SK-N-SH (cell line): ENCODE measurements at regions of chr1 and their contacts with region 1.

Region 1: DNA sequence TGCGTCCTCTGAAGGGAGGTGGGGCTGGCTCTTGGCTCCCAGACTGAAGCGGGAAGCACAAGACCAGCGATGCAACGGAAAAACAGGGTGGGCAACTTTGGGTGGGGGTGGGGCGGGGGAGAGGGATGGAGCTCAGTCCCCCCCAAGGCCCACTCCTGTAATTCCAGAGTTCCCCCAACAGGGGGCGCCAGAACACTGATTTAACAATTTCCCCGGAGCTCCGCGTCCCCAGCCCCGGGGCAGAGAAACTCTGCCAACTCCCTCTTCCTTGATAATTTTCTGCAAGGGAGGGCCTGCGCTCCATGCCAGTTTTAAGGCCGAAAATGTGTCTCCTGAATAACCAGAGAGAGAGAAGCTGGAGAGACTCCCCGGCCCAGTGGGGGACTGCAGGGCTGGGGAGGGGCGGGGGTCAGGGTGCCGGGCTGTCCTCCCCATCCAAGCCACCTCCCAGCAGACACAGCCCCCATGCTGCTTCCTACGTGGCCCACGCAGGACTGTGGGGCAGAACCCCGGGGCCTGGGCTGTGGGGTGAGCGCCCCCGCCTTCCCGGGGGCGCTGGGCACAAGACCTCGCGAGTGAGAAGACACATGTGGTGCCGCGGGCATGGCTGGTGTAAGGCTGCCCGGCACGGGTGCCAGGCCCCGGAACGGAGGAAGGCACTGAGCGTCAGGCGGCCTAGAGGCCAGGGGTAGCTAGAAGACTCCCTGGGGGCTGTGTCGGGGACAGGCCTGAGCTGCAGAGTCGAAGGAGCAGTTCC is 51.4 kb downstream of the KIF21B start:
- DNase-seq: peak; percentile 92
- H3K4me3 ChIP-seq: peak overlapping the region; percentile 9 to 29; a peak in 2 of 4 replicates
- H3K27ac ChIP-seq: no peak overlapping the region
- H3K4me1 ChIP-seq: peaks cover 0 to 3% of the 10 kb centered on the region in 2 experiments; a peak in 1 of 4 replicates
- H3K27me3 ChIP-seq: no peaks in the 10 kb centered on the region
- CTCF ChIP-seq: peak; percentile 79
- EP300 ChIP-seq: no peak
- RAD21 ChIP-seq: peak; percentile 87

Region 2: DNA sequence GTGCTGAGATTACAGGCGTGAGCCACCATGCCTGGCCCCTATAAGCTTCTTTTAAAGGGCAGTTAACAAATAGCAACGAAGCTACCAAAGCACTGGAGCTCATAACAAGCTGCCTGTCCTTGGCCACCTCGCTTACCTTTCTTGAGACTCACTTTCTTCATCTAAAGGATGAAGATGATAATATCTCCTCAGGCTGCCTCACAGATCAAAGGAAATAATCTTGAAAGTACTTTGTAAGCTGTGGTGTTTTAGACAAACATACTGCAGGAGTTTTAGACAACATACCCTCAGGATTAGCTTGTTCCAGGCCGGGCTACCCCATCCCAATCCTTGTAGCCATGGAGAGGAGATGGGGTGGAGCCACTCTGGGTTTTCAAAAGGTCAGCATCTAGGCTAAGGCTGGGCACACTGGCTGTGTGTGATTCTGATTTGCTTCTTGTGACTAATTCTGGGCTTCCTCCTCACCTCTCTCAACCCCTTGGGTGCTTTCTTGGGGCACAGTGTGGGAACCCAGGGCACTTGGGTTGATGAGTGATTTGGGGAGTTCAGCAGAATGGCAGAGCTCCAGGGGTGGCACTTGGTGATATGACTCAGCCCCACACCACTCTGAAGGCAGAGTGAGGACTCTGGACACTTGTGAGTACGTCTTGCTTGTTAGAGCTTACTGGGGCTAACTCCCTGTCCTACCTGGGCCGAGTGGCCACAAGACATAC is 94.1 kb before region 1 on chr1:
- CTCF ChIA-PET with region 1: interaction called, 13 read pairs
- POLR2A ChIA-PET with region 1: no interaction called
- DNase-seq: no peak
- H3K4me3 ChIP-seq: no peak overlapping the region
- H3K27ac ChIP-seq: no peak overlapping the region
- H3K4me1 ChIP-seq: no peaks in the 10 kb centered on the region; a peak in 1 of 4 replicates
- H3K27me3 ChIP-seq: no peaks in the 10 kb centered on the region; the same call in 1 of the 2 replicates
- CTCF ChIP-seq: no peak
- EP300 ChIP-seq: no peak
- RAD21 ChIP-seq: no peak

Region 3: GRCh38 chr1:200925831-200926230 is 46.3 kb before region 1 on chr1:
- CTCF ChIA-PET with region 1: no interaction called
- POLR2A ChIA-PET with region 1: no interaction called
- DNase-seq: no peak
- H3K4me3 ChIP-seq: no peak overlapping the region
- H3K27ac ChIP-seq: no peak overlapping the region
- H3K4me1 ChIP-seq: no peaks in the 10 kb centered on the region
- H3K27me3 ChIP-seq: peaks cover 10% of the 10 kb centered on the region; the same call in 1 of the 2 replicates
- CTCF ChIP-seq: no peak
- EP300 ChIP-seq: no peak
- RAD21 ChIP-seq: no peak

Region 4: DNA sequence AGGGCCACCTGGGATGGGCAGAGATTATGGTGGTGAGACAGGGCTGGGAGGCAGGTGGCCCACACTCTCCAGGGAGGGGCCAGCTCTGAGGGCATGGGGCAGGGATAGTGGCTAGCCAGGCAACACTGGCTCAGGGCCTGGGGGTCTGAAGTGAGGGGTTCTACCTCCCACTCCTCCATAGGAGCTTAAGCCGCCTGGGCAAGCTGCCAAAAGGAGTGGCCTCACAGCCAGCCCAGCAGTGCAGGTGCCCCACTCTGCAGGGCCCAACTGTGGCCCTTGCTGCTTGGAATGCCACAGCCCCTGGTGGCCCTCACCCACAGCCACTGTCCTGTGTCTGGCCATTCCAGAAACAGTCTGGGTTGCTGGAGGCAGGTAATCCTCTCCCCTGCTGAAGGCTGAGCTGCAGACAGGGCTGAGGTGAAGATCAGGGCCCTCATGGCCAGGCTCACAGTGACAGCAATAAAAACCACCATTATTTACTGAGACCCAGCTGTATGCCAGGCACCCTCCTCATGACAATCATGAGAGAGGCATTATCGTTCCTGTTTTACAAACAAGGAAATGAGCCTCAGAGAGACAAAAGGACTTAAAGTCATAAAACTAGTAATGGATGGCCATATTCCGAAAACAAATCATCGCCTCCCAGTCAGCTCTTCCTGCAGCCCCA is 20.4 kb after region 1 on chr1:
- CTCF ChIA-PET with region 1: interaction called, 49 read pairs
- POLR2A ChIA-PET with region 1: no interaction called
- DNase-seq: no peak
- H3K4me3 ChIP-seq: no peak overlapping the region
- H3K27ac ChIP-seq: no peak overlapping the region
- H3K4me1 ChIP-seq: no peaks in the 10 kb centered on the region; a peak in 1 of 4 replicates
- H3K27me3 ChIP-seq: no peaks in the 10 kb centered on the region
- CTCF ChIP-seq: no peak
- EP300 ChIP-seq: no peak
- RAD21 ChIP-seq: no peak

Region 5: DNA sequence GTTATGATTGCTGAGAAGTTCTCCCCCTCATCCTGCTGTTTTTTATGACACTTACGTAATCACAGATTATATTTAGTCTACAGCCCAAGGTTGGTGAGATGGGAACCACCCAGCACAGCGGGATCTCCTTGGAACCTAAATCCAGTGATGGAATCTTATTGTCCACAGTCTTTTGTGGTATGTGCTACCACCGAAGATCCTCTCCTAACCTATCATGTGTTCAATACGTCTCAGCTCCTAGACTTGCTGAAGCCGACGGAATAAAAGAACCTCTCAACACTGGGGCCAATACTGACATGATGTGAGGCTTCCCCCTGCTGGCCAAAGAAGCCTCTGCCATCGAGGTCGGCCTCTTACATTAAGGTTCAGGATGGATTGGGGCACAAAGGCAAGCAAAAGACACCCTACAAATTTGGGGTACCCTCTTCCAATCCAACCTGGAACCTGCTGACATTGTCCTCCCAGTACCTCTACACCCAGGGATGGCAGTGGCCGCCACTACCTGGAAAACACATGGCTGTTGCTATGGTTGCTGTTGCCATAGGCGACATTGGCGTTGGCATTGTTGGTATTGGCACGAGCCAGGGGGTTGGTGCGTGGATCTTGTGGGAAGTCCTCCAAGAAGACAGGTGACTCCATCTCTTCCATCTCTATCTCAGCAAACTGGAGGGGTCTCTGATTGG is 70.8 kb after region 1 on chr1:
- CTCF ChIA-PET with region 1: interaction called, 277 read pairs
- POLR2A ChIA-PET with region 1: no interaction called
- DNase-seq: peak; percentile 76
- H3K4me3 ChIP-seq: peak overlapping the region in 1 of 2 experiments; percentile 7; a peak in 1 of 4 replicates
- H3K27ac ChIP-seq: no peak overlapping the region
- H3K4me1 ChIP-seq: peaks cover 0 to 7% of the 10 kb centered on the region in 2 experiments; a peak in 1 of 4 replicates
- H3K27me3 ChIP-seq: peaks cover 19% of the 10 kb centered on the region; the same call in 1 of the 2 replicates
- CTCF ChIP-seq: peak; percentile 87
- EP300 ChIP-seq: no peak
- RAD21 ChIP-seq: peak; percentile 92

Region 6: GRCh38 chr1:201080135-201080534 is 108.0 kb after region 1 on chr1:
- CTCF ChIA-PET with region 1: interaction called, 14 read pairs
- POLR2A ChIA-PET with region 1: no interaction called
- DNase-seq: no peak
- H3K4me3 ChIP-seq: no peak overlapping the region
- H3K27ac ChIP-seq: no peak overlapping the region
- H3K4me1 ChIP-seq: no peaks in the 10 kb centered on the region
- H3K27me3 ChIP-seq: peaks cover 14% of the 10 kb centered on the region; the same call in 1 of the 2 replicates
- CTCF ChIP-seq: no peak
- EP300 ChIP-seq: no peak
- RAD21 ChIP-seq: no peak

Region 7: GRCh38 chr1:201119206-201120197 is 147.4 kb after region 1 on chr1:
- CTCF ChIA-PET with region 1: interaction called, 114 read pairs
- POLR2A ChIA-PET with region 1: interaction called, 3 read pairs
- DNase-seq: peak; percentile 59
- H3K4me3 ChIP-seq: no peak overlapping the region; a peak in 1 of 4 replicates
- H3K27ac ChIP-seq: no peak overlapping the region
- H3K4me1 ChIP-seq: peaks cover 0 to 3% of the 10 kb centered on the region in 2 experiments; a peak in 1 of 4 replicates
- H3K27me3 ChIP-seq: peaks cover 20% of the 10 kb centered on the region
- CTCF ChIP-seq: peak; percentile 64
- EP300 ChIP-seq: no peak
- RAD21 ChIP-seq: peak; percentile 50

Region 8: DNA sequence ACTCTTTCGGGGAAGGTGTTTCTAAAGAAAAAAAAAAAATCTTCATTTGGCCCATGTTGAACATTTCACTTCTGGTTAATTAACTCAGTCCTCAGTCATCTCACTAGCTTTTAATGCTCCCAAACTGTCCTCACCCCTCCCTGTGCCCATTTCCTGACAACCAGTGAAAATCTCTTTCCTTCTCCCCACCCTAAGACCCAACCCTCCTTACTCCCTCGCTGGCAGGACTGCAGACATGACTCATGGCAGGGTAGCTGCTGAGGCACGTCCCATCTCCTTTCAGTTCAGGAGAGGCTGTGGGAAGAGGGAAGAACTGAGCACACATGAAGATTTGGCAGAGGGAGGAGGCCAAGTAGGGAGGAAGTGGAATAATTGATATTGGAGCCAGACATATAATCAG is 323.7 kb after region 1 on chr1:
- CTCF ChIA-PET with region 1: no interaction called
- POLR2A ChIA-PET with region 1: no interaction called
- DNase-seq: no peak
- H3K4me3 ChIP-seq: no peak overlapping the region
- H3K27ac ChIP-seq: peak overlapping the region in 1 of 2 experiments; percentile 71; a peak in 2 of 4 replicates
- H3K4me1 ChIP-seq: peaks cover 3 to 54% of the 10 kb centered on the region in 2 experiments; a peak in 3 of 4 replicates
- H3K27me3 ChIP-seq: no peaks in the 10 kb centered on the region
- CTCF ChIP-seq: no peak
- EP300 ChIP-seq: no peak
- RAD21 ChIP-seq: no peak